Activated B cell treated with CpG ODN at 0.5 μM for 24 hours (primary cell): ENCODE measurements at regions of chr13 and their contacts with region 1.

Region 1: GRCh38 chr13:27270594-27271520 is at the start of gene RASL11A:
- DNase-seq: peak; percentile 85
- ATAC-seq: peak; percentile 91
- H3K4me3 Mint-ChIP-seq: peak within 1 kb of the TSS; percentile 90
- H3K27ac Mint-ChIP-seq: peak within 1 kb of the TSS; percentile 14
- H3K4me1 Mint-ChIP-seq: peaks cover 28% of the 10 kb centered on the region
- H3K27me3 Mint-ChIP-seq: no peaks in the 10 kb centered on the region
- CTCF ChIP-seq: peak; percentile 99
- total RNA-seq, gene RASL11A: 1.4 and 2.0 TPM in 2 replicates

Region 2: DNA sequence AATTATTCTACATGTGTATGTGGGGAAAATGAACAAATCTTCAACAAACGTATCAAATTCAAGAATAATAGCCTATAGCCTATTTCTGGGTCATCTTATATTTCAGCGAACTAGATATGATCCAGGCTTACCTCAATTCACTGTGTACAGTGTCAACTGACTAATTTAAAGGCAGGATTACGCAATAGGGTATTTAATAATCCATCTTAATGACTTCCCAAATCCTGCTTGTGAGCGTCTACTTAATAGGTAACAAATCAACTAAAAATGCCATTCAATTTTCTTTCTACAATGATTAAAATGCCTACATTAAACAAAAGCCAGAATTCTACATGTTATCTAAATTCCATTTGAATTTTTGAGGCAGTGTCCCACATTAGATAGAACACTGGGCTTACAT is 166.3 kb before region 1 on chr13:
- CTCF ChIA-PET with region 1: no interaction called
- POLR2A ChIA-PET with region 1: no interaction called
- intact Hi-C with region 1: loop called (anchors 5 kb)
- DNase-seq: no peak
- ATAC-seq: no peak
- H3K4me3 Mint-ChIP-seq: no peak overlapping the region
- H3K27ac Mint-ChIP-seq: no peak overlapping the region
- H3K4me1 Mint-ChIP-seq: peaks cover 20% of the 10 kb centered on the region
- H3K27me3 Mint-ChIP-seq: no peaks in the 10 kb centered on the region
- CTCF ChIP-seq: no peak

Region 3: DNA sequence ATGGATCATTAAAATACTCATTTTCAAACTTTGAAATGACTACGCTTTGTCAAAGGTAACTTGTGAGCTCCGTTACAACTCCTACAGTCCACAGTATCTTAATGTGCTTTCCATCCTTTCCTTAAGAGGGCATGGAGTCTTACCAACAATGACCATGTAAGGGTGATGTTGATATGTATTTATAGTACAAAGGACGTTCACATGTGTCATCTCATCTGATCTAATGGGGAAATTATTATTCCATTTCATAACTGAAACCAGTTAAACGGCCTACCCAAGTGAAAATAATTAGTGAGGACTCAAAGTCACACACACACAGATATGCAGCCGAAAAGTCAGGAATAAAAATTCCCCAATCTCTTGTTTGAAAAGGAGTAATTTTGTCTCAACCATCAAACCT is 108.9 kb before region 1 on chr13:
- CTCF ChIA-PET with region 1: no interaction called
- POLR2A ChIA-PET with region 1: no interaction called
- intact Hi-C with region 1: no loop called
- DNase-seq: no peak
- ATAC-seq: peak; percentile 28
- H3K4me3 Mint-ChIP-seq: peak overlapping the region; percentile 33
- H3K27ac Mint-ChIP-seq: no peak overlapping the region
- H3K4me1 Mint-ChIP-seq: peaks cover 77% of the 10 kb centered on the region
- H3K27me3 Mint-ChIP-seq: no peaks in the 10 kb centered on the region
- CTCF ChIP-seq: no peak

Region 4: DNA sequence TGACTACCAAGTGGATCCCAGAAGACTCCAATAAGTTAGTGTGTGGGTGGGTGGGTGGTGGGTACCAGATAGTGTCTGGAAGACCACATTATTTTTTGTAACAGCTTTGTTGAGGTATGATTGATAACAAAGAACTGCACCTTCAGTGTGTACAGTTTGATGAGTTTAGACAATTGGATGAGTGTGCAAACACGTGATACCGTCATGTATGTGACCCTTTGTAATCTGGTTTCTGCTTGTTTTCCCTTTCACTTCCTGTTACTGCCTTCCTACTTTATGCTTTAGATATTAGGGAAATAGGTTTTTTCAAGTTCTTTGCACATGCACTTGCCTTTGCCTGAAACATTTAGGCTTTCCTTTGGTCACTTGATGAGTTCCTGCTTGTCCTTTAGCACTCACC is 11.0 kb before region 1 on chr13:
- CTCF ChIA-PET with region 1: interaction called, 4 read pairs
- POLR2A ChIA-PET with region 1: interaction called, 3 read pairs
- intact Hi-C with region 1: loop called (anchors 1 kb)
- DNase-seq: no peak
- ATAC-seq: peak; percentile 73
- H3K4me3 Mint-ChIP-seq: peak overlapping the region; percentile 13
- H3K27ac Mint-ChIP-seq: peak overlapping the region; percentile 80
- H3K4me1 Mint-ChIP-seq: peaks cover 61% of the 10 kb centered on the region
- H3K27me3 Mint-ChIP-seq: no peaks in the 10 kb centered on the region
- CTCF ChIP-seq: no peak

Region 5: GRCh38 chr13:27321468-27322431 is 50.9 kb after region 1 on chr13:
- CTCF ChIA-PET with region 1: no interaction called
- POLR2A ChIA-PET with region 1: no interaction called
- intact Hi-C with region 1: loop called (anchors 1 kb)
- DNase-seq: no peak
- ATAC-seq: no peak
- H3K4me3 Mint-ChIP-seq: no peak overlapping the region
- H3K27ac Mint-ChIP-seq: no peak overlapping the region
- H3K4me1 Mint-ChIP-seq: no peaks in the 10 kb centered on the region
- H3K27me3 Mint-ChIP-seq: peaks cover 18% of the 10 kb centered on the region
- CTCF ChIP-seq: no peak

Region 6: GRCh38 chr13:27353166-27353583 is 82.3 kb after region 1 on chr13:
- CTCF ChIA-PET with region 1: interaction called, 3 read pairs
- POLR2A ChIA-PET with region 1: interaction called, 5 read pairs
- intact Hi-C with region 1: loop called (anchors 1 kb)
- DNase-seq: no peak
- ATAC-seq: peak; percentile 96
- H3K4me3 Mint-ChIP-seq: peak overlapping the region; percentile 61
- H3K27ac Mint-ChIP-seq: peak overlapping the region; percentile 79
- H3K4me1 Mint-ChIP-seq: peaks cover 19% of the 10 kb centered on the region
- H3K27me3 Mint-ChIP-seq: no peaks in the 10 kb centered on the region
- CTCF ChIP-seq: no peak

Region 7: DNA sequence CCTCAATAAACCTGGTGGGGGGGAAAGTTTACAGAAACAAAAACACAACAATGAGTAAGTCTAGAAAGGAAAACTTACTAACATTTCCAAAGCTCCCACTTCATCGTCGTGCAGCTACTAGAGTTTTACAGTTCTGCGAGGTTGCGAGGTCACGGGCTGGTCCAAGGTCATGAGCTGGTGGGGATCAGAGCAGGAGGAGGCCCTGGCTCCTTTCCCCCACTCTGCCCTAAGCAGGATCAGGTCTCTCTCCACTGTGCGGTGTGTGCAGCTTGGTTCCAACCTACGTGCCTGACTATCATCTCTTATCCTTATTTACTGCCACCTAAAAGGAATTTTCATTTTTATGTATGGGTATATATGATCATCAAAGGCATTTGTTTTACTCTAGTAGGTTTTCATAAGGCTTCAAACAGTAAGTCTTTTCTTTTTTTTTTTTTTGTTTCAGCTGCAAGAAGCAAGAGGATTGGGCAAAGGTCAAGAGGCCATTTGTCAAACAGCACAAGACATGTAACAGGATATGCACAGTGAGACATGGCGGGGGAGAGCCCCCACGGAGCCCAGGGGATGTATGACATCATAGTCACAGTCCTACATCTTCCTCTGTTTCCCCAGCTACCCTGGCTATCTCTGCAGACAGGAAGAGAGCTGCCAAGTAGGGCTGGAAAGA is 1311.5 kb after region 1 on chr13:
- CTCF ChIA-PET with region 1: no interaction called
- POLR2A ChIA-PET with region 1: no interaction called
- intact Hi-C with region 1: no loop called
- DNase-seq: no peak
- ATAC-seq: no peak
- H3K4me3 Mint-ChIP-seq: no peak overlapping the region
- H3K27ac Mint-ChIP-seq: no peak overlapping the region
- H3K4me1 Mint-ChIP-seq: peaks cover 3% of the 10 kb centered on the region
- H3K27me3 Mint-ChIP-seq: peaks cover 7% of the 10 kb centered on the region
- CTCF ChIP-seq: no peak